Aorta (tissue), 5 donors: ENCODE measurements at regions of chr3 and their contacts with region 1.

Region 1: DNA sequence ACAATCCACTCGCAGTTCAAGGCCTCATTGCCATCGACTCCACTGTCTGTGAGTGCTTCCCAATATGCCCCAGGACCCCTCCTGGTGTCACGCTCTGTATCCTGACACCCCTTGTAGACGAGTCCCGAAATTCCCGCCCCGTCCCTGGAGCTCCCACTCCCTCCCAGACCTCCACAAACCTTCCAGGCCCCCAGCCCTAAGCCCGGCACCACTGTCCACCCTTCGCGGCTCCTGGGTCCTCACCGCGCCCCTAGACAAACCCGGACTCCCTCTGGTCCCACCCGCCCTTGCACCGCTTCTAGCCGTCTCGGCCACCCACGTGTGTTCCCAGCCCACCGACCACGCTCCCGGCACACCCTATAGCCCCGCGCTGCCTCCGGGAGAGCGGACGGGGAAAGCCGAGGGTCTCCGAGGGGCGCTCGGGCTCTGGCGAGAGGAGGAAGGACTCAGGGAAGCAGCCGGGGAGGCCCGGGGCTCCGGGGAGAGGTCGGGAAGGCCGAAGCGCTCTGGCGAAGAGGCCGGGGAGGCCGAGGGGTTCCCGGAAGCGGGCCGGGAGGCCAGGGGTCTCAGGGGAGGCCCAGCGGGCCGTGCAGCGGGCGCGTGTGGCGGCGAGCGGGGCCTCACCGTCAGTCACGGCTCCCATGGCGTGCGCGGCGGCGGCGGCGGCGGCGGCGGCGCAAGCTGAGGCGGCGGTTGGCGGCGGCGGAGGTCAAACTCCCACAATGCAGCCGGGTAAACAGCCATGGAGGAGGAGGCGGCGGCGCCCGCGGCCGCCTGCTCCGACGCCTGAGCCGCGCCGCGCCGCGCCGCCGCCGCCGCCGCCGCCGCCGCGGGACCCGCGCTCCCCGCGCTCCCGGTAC is at the starts of genes ATXN7 and THOC7:
- DNase-seq: peak; percentile 78 to 93
- ATAC-seq: peak; percentile 80
- H3K4me3 ChIP-seq: peak within 1 kb of the TSS; percentile 90 to 92
- H3K27ac ChIP-seq: peak within 1 kb of the TSS in 1 of 2 donors; percentile 68
- H3K4me1 ChIP-seq: peaks cover 2 to 6% of the 10 kb centered on the region in 2 donors
- H3K27me3 ChIP-seq: no peaks in the 10 kb centered on the region
- total RNA-seq, gene ATXN7: 52.3 to 52.5 TPM
- total RNA-seq, gene THOC7: 53.8 TPM

Region 2: DNA sequence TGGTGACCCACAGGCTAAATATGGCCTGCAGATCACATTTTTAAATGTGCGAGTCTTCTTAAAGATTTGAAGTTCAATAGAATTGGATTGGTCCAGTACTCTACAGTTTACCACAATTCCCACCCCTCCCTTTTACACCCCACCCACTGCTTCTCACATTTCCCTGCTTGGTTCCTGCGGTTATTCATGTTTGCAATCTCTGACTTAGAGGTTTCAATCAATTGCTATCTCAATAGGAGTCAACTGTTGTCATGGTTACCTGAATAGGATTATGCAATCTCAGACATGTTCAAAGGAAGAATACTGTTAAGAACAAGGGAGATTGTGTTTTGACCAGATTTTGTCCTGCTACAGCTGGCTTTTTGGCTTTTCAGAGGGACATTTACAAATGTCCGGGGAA is 49.1 kb before region 1 on chr3:
- intact Hi-C with region 1: no loop called
- DNase-seq: no peak
- ATAC-seq: no peak
- H3K4me3 ChIP-seq: no peak overlapping the region
- H3K27ac ChIP-seq: no peak overlapping the region
- H3K4me1 ChIP-seq: no peaks in the 10 kb centered on the region
- H3K27me3 ChIP-seq: no peaks in the 10 kb centered on the region

Region 3: GRCh38 chr3:63911873-63912767 is 48.7 kb after region 1 on chr3 and contains the start of gene SCAANT1:
- intact Hi-C with region 1: loop called (anchors 5 kb)
- DNase-seq: peak; percentile 94 to 96
- ATAC-seq: peak; percentile 94
- H3K4me3 ChIP-seq: peak within 1 kb of the TSS; percentile 86 to 99
- H3K27ac ChIP-seq: peak within 1 kb of the TSS; percentile 98 to 99
- H3K4me1 ChIP-seq: peaks cover 0 to 4% of the 10 kb centered on the region in 2 donors
- H3K27me3 ChIP-seq: no peaks in the 10 kb centered on the region
- total RNA-seq, gene SCAANT1: not detected